ENCODE measurements at regions of chr7 and their contacts with region 1.

Region 1: DNA sequence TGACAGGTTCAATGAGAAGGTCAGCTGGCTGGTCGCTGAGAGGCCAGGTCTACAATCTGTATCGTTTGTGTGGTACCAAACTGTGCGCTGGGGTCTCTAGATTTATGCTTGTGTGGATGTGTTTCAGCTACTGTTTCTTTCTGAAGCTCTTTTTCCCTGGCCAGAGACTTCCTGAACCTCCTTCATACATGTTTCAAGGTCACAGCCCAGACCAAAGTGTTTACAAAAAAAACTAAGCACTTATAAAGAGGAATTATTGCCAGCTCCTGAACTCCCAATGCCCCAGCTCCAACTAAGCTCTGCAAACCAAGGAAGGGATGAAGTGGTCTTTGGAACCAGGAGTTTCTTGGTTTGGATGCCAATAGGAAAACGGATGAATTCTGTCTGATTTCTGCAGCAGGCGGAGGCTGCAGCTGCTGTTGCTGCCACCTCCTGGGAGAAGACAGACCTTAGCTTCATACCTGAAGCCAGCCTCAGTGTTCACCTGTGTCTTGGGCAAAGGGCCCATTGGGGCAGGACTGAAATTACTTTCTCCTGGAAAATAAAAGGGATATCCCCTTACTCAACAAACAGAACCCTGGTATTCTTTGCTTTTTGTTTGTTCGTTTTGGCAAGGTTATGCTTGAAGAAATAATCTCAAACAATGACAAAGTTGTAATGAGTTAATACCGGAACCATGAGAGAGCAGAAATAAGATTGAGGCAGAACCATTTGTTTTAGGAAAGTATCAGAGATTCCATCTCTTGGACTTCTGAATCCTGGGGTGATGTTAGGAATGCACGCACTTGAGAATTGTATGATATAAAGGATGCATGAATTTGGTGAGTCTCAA is 24.6 kb upstream of the MKLN1 start:
- DNase-seq: peak; percentile 27
- H3K4me3 ChIP-seq: no peak overlapping the region
- H3K27ac ChIP-seq: no peak overlapping the region
- H3K4me1 ChIP-seq: no peaks in the 10 kb centered on the region
- H3K27me3 ChIP-seq: no peaks in the 10 kb centered on the region
- CTCF ChIP-seq: peak; percentile 48

Region 2: DNA sequence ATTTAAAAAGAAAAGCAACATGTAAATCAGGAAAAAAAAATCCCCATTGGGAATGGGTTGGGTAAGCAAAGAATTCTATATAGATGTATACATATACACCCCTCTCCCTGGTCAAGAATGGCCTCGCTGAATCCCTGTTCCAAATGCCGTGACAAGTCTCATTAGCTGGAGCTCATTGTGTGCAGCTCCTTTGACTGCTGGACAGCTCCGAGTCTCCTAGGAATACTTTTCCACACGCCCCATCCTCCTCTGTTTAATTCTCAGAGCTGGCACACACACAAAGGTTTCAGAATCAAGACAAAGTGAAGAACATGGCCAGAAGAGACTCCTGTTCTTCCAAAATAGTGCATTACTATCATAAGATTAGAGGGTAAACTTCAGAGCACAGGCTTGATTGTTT is 106.3 kb before region 1 on chr7:
- intact Hi-C with region 1: loop called (anchors 10 kb)
- DNase-seq: no peak
- H3K4me3 ChIP-seq: no peak overlapping the region
- H3K27ac ChIP-seq: no peak overlapping the region
- H3K4me1 ChIP-seq: no peaks in the 10 kb centered on the region
- H3K27me3 ChIP-seq: no peaks in the 10 kb centered on the region
- CTCF ChIP-seq: no peak

Measured in colonic mucosa (tissue), 4 donors.